Activated T-helper 1 cell treated with anti-CD3 and anti-CD28 coated beads, Interleukin-12 subunit alpha, Interleukin-12 subunit beta, Interleukin-2, Interleukin-4 antibody, amounts not matched to agents 30 ng/mL and 10 ng/mL and 1 ng/mL, durations not matched to agents 14 hours and 24 hours and 36 hours (primary cell): ENCODE measurements at regions of chr1 and their contacts with region 1.

Region 1: DNA sequence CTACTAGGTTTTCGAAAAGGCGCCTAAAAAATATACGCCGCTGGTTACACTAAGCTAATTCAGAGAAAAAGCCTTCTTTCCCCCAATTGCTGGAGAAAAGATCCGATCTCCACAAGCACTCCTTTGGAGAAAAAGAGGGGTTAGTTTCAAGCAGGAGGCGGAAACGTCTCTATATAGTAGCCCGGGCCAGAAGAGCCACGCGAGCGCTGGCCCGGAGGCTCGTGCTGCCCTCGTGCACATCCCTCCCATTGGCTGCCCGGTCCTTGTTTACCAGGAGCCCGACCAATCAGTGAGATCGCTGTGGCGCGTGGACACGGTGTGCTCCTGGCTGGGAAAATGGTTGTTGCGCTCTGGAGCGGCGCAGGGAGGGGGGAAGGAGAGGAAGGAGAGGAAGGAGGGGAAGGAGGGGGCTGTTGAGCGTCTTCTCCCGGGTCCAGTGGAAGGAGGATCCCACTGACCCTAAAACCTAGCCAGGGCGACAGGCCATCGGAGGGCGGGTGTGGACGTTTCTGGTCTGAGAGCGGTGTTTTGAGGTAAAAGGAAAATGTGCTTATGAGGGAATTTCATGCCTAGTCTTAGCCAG is at the start of gene TXNIP:
- DNase-seq: peak; percentile 92
- H3K4me3 Mint-ChIP-seq: peak within 1 kb of the TSS; percentile 94
- H3K27ac Mint-ChIP-seq: peak within 1 kb of the TSS; percentile 99
- H3K4me1 Mint-ChIP-seq: peaks cover 65% of the 10 kb centered on the region
- H3K27me3 Mint-ChIP-seq: no peaks in the 10 kb centered on the region
- total RNA-seq, gene TXNIP: 107 and 108 TPM in 2 replicates

Region 2: DNA sequence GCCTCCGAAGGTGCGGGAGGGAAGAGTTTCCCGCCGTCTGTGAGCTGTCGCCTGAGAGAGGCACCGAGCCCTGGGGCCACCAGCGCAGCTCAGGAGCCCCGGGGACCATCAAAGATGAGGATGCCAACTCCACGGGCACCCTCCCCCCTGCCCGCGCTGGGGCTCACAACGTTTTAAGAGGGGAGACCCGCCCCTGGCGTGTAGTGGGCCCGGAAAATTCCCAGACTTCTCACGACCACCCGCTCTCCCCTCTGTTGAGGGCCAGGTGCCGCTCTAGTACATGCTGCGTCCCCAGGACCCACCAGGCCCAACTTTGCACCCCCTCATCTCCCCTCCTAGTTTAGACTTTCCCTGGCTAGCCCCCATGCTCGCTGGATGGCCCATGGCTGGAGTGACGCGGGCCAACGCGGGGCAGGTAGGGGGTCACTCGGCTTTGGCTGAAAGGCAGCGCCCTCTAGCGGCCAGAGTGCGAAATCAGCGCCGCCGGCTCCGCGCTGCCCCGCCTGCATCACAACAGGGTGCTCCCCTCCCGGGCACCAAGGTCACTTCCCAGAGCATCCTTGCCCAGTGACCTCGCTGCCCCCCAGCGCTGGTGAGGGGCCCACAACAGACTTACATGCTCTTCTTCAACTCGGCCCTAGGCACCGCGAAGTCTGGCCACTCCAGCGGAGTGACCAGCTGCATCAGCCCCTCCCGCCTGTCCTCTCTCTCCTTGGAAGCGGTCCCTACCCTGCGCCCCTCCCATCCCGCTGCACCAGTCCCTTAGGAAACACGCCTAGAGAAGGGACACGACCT is 275.4 kb before region 1 on chr1:
- intact Hi-C with region 1: no loop called
- DNase-seq: peak; percentile 62
- H3K4me3 Mint-ChIP-seq: peak overlapping the region; percentile 72
- H3K27ac Mint-ChIP-seq: no peak overlapping the region
- H3K4me1 Mint-ChIP-seq: peaks cover 23% of the 10 kb centered on the region
- H3K27me3 Mint-ChIP-seq: peaks cover 25% of the 10 kb centered on the region

Region 3: DNA sequence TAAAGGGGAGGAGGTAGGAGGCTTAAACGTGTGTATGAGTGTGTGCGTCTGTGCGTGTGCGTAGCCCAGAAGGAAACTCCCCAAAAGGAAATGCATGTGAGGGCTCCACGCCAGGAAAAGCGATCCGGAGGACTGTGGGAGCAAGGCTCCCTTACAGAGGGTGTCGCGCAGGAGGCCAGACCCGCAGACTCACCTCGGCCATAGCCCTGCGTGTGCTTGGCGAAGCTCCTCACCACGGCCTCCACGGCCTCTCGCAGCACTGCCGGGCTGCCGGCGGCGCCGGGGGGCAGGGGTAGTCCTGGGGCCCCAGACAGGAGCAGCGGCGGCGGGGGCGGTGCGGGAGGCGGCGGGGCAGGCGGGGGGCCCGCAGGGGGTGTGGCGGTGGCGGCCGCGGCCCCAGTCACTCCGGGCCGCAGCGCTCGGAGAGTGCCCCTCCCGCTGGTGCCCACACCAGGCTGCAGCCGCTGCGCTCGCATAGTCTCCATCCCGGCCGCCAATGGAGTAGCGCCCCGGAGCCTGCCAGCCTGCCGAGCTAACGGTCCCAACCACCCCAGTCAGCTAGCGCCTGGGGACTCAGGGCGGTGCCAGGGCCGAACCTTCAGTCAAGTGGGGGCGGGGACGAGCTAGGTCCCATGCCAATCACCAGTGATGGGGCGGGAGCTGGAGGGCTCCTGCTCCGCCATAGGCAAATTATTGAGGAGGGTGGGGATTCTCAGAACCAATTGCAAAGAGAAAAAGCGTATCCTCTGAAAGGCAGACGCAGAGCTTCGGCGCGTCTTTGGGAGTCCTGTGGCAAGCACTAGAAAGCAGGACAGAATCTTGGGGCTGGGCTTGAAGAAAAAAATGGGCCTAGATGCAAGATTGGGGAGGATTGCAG is 38.8 kb before region 1 on chr1 and contains the start of gene LIX1L:
- intact Hi-C with region 1: loop called (anchors 1 kb)
- DNase-seq: peak; percentile 93
- H3K4me3 Mint-ChIP-seq: peak within 1 kb of the TSS; percentile 93
- H3K27ac Mint-ChIP-seq: peak within 1 kb of the TSS; percentile 93
- H3K4me1 Mint-ChIP-seq: peaks cover 68% of the 10 kb centered on the region
- H3K27me3 Mint-ChIP-seq: no peaks in the 10 kb centered on the region
- total RNA-seq, gene LIX1L: 30.3 and 32.2 TPM in 2 replicates

Region 4: GRCh38 chr1:145978854-145979759 is 17.4 kb before region 1 on chr1:
- intact Hi-C with region 1: loop called (anchors 1 kb)
- DNase-seq: peak; percentile 87
- H3K4me3 Mint-ChIP-seq: no peak overlapping the region
- H3K27ac Mint-ChIP-seq: no peak overlapping the region
- H3K4me1 Mint-ChIP-seq: peaks cover 9% of the 10 kb centered on the region
- H3K27me3 Mint-ChIP-seq: no peaks in the 10 kb centered on the region

Region 5: DNA sequence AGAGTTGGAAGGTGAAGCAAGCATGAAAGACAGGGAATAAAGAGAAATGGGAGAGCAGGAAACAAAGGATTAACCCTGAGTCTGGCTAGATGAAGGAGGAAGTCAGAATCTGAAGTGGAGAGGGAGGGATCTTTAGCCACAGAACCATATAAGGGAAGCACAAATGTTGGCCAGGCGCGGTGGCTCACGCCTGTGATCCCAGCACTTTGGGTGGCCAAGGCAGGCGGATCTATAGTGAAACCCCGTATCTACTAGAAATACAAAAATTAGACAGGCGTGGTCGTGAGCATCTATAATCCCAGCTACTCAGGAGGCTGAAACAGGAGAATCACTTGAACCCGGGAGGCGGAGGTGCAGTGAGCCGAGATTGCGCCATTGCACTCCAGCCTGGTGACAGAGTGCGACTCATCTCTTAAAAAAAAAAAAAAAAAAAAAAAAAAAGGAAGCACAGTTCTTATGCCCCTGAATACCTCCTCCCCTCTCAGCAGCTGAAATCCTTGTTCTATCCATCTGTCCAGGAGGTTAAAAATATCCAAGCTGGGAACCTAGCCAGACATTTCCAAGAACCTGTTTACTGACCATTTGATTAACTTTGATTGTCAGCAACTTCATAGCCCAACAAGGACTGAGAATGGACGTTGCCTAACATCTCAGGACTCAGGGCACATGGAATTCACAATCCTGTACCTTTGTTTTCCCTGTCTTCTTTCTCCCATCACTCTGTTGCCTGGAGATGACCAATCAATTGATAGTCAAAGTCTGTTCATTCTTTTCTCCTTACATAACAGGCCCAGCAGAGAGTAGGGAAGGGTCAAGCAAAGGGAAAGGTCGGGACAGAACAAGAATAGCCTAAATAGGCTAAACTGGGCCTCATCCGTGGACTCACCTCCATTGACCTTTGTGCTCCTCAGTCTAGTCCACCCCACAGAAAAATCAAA is 10.8 kb before region 1 on chr1:
- intact Hi-C with region 1: loop called (anchors 1 kb)
- DNase-seq: no peak
- H3K4me3 Mint-ChIP-seq: peak overlapping the region; percentile 23
- H3K27ac Mint-ChIP-seq: peak overlapping the region; percentile 80
- H3K4me1 Mint-ChIP-seq: peaks cover 42% of the 10 kb centered on the region
- H3K27me3 Mint-ChIP-seq: no peaks in the 10 kb centered on the region

Region 6: GRCh38 chr1:146007506-146008133 is 11.1 kb after region 1 on chr1:
- intact Hi-C with region 1: loop called (anchors 1 kb)
- DNase-seq: no peak
- H3K4me3 Mint-ChIP-seq: no peak overlapping the region
- H3K27ac Mint-ChIP-seq: peak overlapping the region; percentile 76
- H3K4me1 Mint-ChIP-seq: peaks cover 41% of the 10 kb centered on the region
- H3K27me3 Mint-ChIP-seq: no peaks in the 10 kb centered on the region

Region 7: GRCh38 chr1:146036965-146037646 is 40.6 kb after region 1 on chr1:
- intact Hi-C with region 1: loop called (anchors 1 kb)
- DNase-seq: peak; percentile 70
- H3K4me3 Mint-ChIP-seq: peak overlapping the region; percentile 93
- H3K27ac Mint-ChIP-seq: peak overlapping the region; percentile 98
- H3K4me1 Mint-ChIP-seq: peaks cover 50% of the 10 kb centered on the region
- H3K27me3 Mint-ChIP-seq: peaks cover 24% of the 10 kb centered on the region